ENCODE measurements at regions of chr11 and their contacts with region 1.

Region 1: GRCh38 chr11:19903620-19904069 is 191.0 kb downstream of the NAV2 start:
- DNase-seq: peak; percentile 81
- H3K4me3 Mint-ChIP-seq: no peak overlapping the region
- H3K27ac Mint-ChIP-seq: no peak overlapping the region
- H3K4me1 Mint-ChIP-seq: peaks cover 9% of the 10 kb centered on the region
- H3K27me3 Mint-ChIP-seq: no peaks in the 10 kb centered on the region
- CTCF ChIP-seq: peak; percentile 68

Region 2: GRCh38 chr11:18853086-18853720 is 1050.4 kb before region 1 on chr11:
- CTCF ChIA-PET with region 1: no interaction called
- intact Hi-C with region 1: no loop called
- DNase-seq: peak; percentile 24
- H3K4me3 Mint-ChIP-seq: no peak overlapping the region
- H3K27ac Mint-ChIP-seq: no peak overlapping the region
- H3K4me1 Mint-ChIP-seq: peaks cover 10% of the 10 kb centered on the region
- H3K27me3 Mint-ChIP-seq: peaks cover 54% of the 10 kb centered on the region
- CTCF ChIP-seq: peak; percentile 53

Region 3: DNA sequence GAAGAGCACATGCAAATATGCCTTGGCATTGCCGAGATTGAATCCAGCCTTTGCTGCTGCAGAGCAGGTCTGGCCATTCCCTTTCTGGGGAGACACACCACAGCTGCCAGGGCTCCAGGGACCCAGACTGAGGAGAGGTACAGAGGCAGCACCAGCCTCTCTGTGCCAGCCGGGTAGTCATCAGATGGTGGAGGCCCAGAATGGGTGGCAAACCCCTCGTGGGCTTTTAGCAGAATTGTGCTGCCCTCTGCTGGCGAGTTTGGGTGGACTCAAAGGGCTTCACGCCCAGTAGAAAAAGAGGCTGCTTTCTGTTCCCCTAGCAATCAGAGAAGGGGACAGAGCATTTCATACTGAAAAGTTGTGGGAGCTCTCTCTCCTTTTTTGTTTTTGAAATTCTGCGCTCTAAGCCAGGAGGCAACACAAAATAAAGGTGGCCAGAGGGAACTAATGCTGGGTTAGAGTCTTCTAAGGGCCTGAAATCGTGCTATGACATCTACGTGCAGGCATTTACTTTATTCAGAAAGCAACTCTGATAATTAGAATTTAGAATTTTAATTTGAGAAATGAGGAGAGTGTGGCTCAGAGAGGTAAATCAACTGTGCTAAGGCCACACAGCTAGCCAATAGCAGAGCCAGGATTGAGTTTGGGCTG is 349.8 kb before region 1 on chr11:
- CTCF ChIA-PET with region 1: interaction called, 11 read pairs
- intact Hi-C with region 1: loop called (anchors 1 kb)
- DNase-seq: peak; percentile 86
- H3K4me3 Mint-ChIP-seq: no peak overlapping the region
- H3K27ac Mint-ChIP-seq: no peak overlapping the region
- H3K4me1 Mint-ChIP-seq: peaks cover 8% of the 10 kb centered on the region
- H3K27me3 Mint-ChIP-seq: peaks cover 70% of the 10 kb centered on the region
- CTCF ChIP-seq: peak; percentile 78

Region 4: DNA sequence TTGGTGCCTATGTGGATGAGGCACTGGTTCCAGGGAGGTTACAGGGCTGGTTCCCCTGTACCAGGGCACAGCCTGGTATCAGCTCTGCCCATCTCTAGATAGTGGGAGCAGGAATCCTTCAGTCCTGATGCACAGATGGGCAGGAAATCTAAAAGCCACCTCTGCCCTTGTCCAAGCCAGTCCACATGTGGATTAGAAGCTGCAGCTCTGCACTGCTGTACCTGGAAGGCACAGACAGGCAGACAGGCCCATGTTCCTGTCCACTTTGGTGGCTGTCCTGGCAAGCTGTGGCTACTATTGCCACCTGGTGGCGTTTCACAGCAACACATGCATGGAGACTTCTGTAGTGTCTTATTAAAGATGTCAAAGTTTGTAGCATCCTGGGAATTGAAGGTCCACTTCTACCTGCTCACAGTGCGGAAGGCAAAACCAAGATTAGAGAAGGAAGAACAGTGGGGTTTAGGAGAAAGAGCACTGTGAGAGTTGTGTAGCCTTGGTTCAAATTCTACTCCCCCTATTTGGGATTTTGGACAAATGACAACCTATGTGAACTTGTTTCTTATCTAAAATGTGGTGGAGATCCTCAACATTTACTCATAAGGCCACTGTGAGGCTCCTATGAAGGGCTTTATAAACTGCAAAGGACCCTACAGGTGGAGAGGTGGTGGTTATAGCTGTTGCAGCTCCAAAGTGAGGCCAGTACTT is 160.9 kb before region 1 on chr11:
- CTCF ChIA-PET with region 1: interaction called, 3 read pairs
- intact Hi-C with region 1: loop called (anchors 5 kb)
- DNase-seq: peak; percentile 81
- H3K4me3 Mint-ChIP-seq: no peak overlapping the region
- H3K27ac Mint-ChIP-seq: no peak overlapping the region
- H3K4me1 Mint-ChIP-seq: peaks cover 31% of the 10 kb centered on the region
- H3K27me3 Mint-ChIP-seq: no peaks in the 10 kb centered on the region
- CTCF ChIP-seq: peak; percentile 92

Region 5: DNA sequence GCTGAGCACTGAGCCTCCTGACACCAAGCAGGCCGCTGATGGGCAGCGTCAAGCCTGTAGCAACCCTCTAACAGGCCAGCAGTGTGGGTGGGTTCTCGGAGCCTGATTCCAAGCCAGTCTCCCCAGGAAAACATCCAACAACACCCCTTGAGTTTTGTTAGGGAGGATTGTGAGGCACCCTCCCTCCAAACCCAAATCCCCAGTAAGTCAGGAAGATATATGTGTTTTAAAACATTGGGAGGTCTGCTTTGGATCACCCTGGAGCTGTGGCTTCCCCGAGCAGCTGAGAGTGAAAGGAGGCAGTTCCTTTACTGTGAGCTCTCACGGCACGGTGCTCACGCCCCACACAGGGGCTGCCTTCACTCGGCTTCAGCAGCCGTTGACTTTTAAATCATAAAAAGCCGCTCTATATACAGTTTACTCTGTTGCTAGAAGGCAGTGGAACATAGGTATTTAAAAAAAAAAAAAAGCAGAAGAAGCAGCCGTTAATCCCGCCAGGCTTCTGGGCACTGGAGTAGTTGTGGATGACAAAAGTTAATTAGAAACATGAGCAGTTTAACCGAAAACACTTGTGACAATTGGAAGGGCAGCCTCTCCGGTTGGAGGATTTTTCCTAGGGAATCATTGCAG is 27.6 kb after region 1 on chr11:
- CTCF ChIA-PET with region 1: no interaction called
- intact Hi-C with region 1: no loop called
- DNase-seq: no peak
- H3K4me3 Mint-ChIP-seq: no peak overlapping the region
- H3K27ac Mint-ChIP-seq: no peak overlapping the region
- H3K4me1 Mint-ChIP-seq: no peaks in the 10 kb centered on the region
- H3K27me3 Mint-ChIP-seq: no peaks in the 10 kb centered on the region
- CTCF ChIP-seq: no peak

Region 6: GRCh38 chr11:20110908-20111669 is 207.4 kb after region 1 on chr11:
- CTCF ChIA-PET with region 1: no interaction called
- intact Hi-C with region 1: loop called (anchors 5 kb)
- DNase-seq: peak; percentile 78
- H3K4me3 Mint-ChIP-seq: no peak overlapping the region
- H3K27ac Mint-ChIP-seq: peak overlapping the region; percentile 81
- H3K4me1 Mint-ChIP-seq: peaks cover 29% of the 10 kb centered on the region
- H3K27me3 Mint-ChIP-seq: no peaks in the 10 kb centered on the region
- CTCF ChIP-seq: peak; percentile 77

Region 7: DNA sequence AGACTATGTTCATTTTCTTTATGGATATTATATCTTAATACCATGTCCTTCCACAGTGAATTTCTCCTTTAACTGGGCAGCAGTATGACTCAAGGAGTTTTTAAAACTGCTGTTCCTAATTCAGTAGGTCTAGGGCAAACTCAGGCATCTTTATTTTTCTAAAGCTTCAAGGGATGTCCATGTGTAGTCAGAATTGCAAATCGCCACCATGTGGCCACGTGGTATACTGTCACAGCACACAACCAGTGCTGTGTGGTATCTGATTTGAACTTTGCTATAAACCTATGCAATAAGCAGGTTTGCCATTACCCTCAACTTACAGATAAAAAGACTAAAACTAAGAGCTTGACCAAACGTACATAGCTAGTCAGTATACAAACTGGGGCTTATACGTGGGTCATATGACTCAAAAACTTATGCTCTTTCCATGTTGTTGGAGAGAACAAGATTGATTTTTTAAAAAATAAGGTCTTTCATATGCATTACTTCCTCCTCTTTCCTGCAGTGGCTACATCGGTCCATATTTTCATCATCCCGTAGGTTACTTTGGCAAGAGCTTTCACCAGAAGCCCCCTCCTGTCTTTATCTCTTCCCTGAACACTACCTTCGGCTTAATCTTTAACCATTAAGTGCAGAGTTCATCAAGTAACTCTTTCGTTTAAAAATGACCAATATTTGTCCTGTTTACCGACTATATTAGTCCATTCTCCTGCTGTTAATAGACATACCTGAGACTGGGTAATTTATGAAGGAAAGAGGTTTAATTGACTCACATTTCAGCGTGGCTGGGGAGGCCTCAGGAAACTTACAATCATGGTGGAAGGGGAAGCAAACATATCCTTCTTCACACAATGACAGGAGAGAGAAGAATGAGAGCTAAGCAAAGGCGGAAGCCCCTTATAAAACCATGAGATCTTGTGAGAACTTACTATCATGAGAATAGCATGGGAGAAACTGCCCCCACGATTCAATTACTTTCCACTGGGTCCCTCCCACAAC is 451.9 kb after region 1 on chr11:
- CTCF ChIA-PET with region 1: interaction called, 4 read pairs
- intact Hi-C with region 1: loop called (anchors 5 kb)
- DNase-seq: peak; percentile 57
- H3K4me3 Mint-ChIP-seq: no peak overlapping the region
- H3K27ac Mint-ChIP-seq: no peak overlapping the region
- H3K4me1 Mint-ChIP-seq: peaks cover 37% of the 10 kb centered on the region
- H3K27me3 Mint-ChIP-seq: no peaks in the 10 kb centered on the region
- CTCF ChIP-seq: peak; percentile 52

Measured in Calu3 (cell line).